Right ventricle myocardium inferior (tissue), 1 donor: ENCODE measurements at regions of chr12 and their contacts with region 1.

Region 1: GRCh38 chr12:19288603-19289244 is 150.6 kb upstream of the AEBP2 start:
- DNase-seq: no peak
- ATAC-seq: no peak

Region 2: GRCh38 chr12:18430425-18431048 is 858.2 kb before region 1 on chr12:
- intact Hi-C with region 1: loop called (anchors 10 kb)
- DNase-seq: no peak
- ATAC-seq: peak; percentile 83

Region 3: GRCh38 chr12:18861287-18861858 is 427.4 kb before region 1 on chr12:
- intact Hi-C with region 1: loop called (anchors 10 kb)
- DNase-seq: no peak
- ATAC-seq: no peak

Region 4: GRCh38 chr12:19205120-19205519 is 83.6 kb before region 1 on chr12:
- intact Hi-C with region 1: no loop called
- DNase-seq: no peak
- ATAC-seq: no peak